Transverse colon (tissue), 4 donors: ENCODE measurements at regions of chr6 and their contacts with region 1.

Region 1: GRCh38 chr6:2196079-2196679 is 49.2 kb downstream of the GMDS start:
- DNase-seq: peak; percentile 21
- H3K4me3 ChIP-seq: no peak overlapping the region
- H3K27ac ChIP-seq: no peak overlapping the region
- H3K4me1 ChIP-seq: peaks cover 0 to 15% (median 4%) of the 10 kb centered on the region in 4 donors
- H3K27me3 ChIP-seq: no peaks in the 10 kb centered on the region
- CTCF ChIP-seq: peak; percentile 71 to 80 (median 76)
- EP300 ChIP-seq: no peak
- POLR2A ChIP-seq: no peak

Region 2: DNA sequence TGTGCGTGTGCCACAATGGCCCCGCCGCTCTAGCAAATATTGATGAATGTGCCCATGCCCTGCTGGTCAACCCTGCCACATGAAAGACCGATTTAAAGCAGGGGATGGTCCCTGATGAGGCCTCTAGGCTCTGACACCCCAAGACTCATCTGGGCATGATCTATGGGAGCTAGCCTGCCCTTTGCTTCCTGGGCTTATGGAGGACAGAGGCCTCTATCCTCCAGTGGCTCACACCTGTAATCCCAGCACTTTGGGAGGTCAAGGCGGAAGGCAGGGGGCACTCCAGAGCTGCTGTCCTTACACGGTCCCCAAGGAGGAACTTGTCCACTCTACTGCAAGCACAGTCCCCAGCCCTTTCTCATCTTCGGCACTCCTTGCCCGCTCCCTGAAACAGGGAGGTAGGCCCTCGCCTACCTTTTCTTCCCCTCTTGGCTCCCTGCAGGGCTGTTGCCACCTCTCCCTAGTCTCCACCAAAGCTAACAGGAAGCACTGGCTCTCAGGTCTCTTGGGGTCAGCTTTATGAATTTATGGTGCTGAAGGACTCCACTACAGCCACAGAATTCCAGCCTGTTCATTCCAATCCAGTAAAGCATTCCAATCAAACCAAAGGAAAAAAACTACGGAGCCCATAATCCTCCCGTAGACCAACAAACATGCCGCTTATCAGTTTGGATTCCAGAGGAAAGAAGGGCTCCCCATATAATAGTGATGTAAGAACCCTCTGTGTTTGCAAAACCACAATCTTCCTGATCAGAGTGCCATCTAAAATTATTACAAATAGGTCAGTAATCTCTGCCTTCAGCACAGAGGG is 932.9 kb before region 1 on chr6:
- in situ Hi-C with region 1: no loop called
- intact Hi-C with region 1: no loop called
- DNase-seq: no peak
- H3K4me3 ChIP-seq: no peak overlapping the region
- H3K27ac ChIP-seq: no peak overlapping the region
- H3K4me1 ChIP-seq: no peaks in the 10 kb centered on the region
- H3K27me3 ChIP-seq: no peaks in the 10 kb centered on the region
- CTCF ChIP-seq: no peak
- EP300 ChIP-seq: no peak
- POLR2A ChIP-seq: no peak

Region 3: DNA sequence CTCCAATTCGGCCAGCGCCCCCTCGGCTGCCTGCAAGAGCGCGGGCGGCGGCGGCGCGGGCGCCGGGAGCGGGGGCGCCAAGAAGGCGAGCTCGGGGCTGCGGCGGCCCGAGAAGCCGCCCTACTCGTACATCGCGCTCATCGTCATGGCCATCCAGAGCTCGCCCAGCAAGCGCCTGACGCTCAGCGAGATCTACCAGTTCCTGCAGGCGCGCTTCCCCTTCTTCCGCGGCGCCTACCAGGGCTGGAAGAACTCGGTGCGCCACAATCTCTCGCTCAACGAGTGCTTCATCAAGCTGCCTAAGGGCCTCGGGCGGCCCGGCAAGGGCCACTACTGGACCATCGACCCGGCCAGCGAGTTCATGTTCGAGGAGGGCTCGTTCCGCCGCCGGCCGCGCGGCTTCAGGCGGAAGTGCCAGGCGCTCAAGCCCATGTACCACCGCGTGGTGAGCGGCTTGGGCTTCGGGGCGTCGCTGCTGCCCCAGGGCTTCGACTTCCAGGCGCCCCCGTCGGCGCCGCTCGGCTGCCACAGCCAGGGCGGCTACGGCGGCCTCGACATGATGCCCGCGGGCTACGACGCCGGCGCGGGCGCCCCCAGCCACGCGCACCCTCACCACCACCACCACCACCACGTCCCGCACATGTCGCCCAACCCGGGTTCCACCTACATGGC is 805.9 kb before region 1 on chr6:
- in situ Hi-C with region 1: no loop called
- intact Hi-C with region 1: no loop called
- DNase-seq: no peak
- H3K4me3 ChIP-seq: peak overlapping the region; percentile 28 to 56 (median 47)
- H3K27ac ChIP-seq: peak overlapping the region; percentile 82 to 88 (median 86)
- H3K4me1 ChIP-seq: peaks cover 0 to 20% (median 5%) of the 10 kb centered on the region in 4 donors
- H3K27me3 ChIP-seq: peaks cover 97% of the 10 kb centered on the region
- CTCF ChIP-seq: no peak
- EP300 ChIP-seq: no peak
- POLR2A ChIP-seq: no peak

Region 4: DNA sequence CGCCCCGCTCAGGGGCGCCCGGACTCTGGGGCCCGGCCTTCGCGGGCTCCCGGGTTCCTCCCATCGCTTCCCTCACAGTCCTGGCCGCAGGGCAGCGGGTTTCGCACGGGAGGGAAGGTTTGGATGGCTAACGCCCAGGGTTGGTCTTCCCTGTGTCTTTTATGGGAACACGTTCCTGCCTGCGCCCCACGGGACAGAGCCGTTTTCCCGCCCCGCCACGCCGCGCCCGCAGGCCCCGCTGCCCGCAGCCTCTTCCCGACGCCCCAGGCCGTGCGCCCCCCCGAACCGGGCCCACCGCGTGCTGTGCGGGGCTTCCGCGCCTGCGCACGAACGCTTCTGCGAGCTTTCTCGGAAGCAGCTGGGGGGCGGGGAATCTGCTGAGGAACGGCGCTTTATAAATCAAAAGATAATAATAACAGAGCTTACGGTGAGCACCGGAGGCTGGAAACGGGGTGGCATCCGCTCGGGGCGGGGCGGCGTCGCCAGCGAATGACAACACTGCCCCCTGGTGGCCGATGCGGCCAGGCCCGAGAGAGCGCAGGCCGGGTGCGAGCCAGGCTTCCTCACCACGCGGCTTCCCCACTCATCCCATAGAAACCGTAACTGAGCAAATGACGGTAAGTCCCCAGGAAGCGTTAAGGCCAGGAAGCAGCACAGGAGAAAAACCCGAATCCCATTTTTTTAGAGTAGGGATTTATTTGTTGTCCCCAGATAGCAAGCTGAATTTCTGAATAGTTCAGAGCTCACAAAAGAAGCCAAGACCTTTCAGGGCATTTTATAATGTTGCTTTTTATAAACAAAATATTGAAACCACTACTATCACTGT is 438.2 kb after region 1 on chr6:
- in situ Hi-C with region 1: loop called in 1 of 4 experiments (anchors 25 kb)
- intact Hi-C with region 1: no loop called
- DNase-seq: peak; percentile 82
- H3K4me3 ChIP-seq: peak overlapping the region; percentile 20 to 52 (median 32)
- H3K27ac ChIP-seq: peak overlapping the region; percentile 6 to 40 (median 25)
- H3K4me1 ChIP-seq: peaks cover 0 to 13% (median 7%) of the 10 kb centered on the region in 4 donors
- H3K27me3 ChIP-seq: no peaks in the 10 kb centered on the region
- CTCF ChIP-seq: peak; percentile 95 to 99 (median 97)
- EP300 ChIP-seq: no peak
- POLR2A ChIP-seq: no peak